ENCODE measurements at regions of chr17 and their contacts with region 1.

Region 1: GRCh38 chr17:39057701-39058206 is 90.6 kb upstream of the FBXO47 start:
- DNase-seq: no peak
- ATAC-seq: no peak
- H3K4me3 ChIP-seq: no peak overlapping the region
- H3K4me3 Mint-ChIP-seq: peak overlapping the region; percentile 55
- H3K27ac ChIP-seq: no peak overlapping the region
- H3K27ac Mint-ChIP-seq: no peak overlapping the region
- H3K4me1 ChIP-seq: peaks cover 11% of the 10 kb centered on the region
- H3K4me1 Mint-ChIP-seq: peaks cover 16% of the 10 kb centered on the region
- H3K27me3 ChIP-seq: no peaks in the 10 kb centered on the region
- H3K27me3 Mint-ChIP-seq: peaks cover under 1% of the 10 kb centered on the region
- CTCF ChIP-seq: no peak

Region 2: DNA sequence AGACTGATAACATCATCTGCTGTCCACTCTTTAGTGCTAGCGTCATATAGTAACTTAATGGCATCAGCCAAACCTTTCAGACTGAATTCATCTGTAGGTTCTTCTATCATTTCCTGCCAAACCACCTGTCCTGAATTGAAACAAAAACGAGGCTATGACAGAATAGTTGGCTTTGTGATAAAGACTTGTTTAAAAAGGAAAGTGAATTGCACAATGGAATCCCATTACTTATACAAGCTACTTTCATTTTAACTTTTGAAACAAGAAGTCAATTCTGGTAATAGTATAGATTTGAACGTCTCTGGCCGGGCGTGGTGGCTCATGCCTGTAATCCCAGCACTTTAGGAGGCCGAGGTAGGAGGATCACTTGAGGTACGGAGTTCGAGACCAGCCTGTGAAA is 114.1 kb before region 1 on chr17:
- CTCF ChIA-PET with region 1: no interaction called
- POLR2A ChIA-PET with region 1: no interaction called
- intact Hi-C with region 1: no loop called
- DNase-seq: no peak
- ATAC-seq: no peak
- H3K4me3 ChIP-seq: no peak overlapping the region
- H3K4me3 Mint-ChIP-seq: no peak overlapping the region
- H3K27ac ChIP-seq: no peak overlapping the region
- H3K27ac Mint-ChIP-seq: no peak overlapping the region
- H3K4me1 ChIP-seq: no peaks in the 10 kb centered on the region
- H3K4me1 Mint-ChIP-seq: peaks cover 1% of the 10 kb centered on the region
- H3K27me3 ChIP-seq: no peaks in the 10 kb centered on the region
- H3K27me3 Mint-ChIP-seq: no peaks in the 10 kb centered on the region
- CTCF ChIP-seq: no peak

Region 3: GRCh38 chr17:38967290-38967738 is 90.4 kb before region 1 on chr17 and contains the start of gene FBXO47:
- CTCF ChIA-PET with region 1: no interaction called
- POLR2A ChIA-PET with region 1: no interaction called
- intact Hi-C with region 1: loop called in 1 of 2 experiments (anchors 5 kb)
- DNase-seq: peak; percentile 61 to 93 (median 82)
- ATAC-seq: peak; percentile 98
- H3K4me3 ChIP-seq: peak within 1 kb of the TSS; percentile 18 to 53
- H3K4me3 Mint-ChIP-seq: peak within 1 kb of the TSS; percentile 81
- H3K27ac ChIP-seq: peak within 1 kb of the TSS; percentile 42 to 65
- H3K27ac Mint-ChIP-seq: peak within 1 kb of the TSS; percentile 89
- H3K4me1 ChIP-seq: peaks cover 9% of the 10 kb centered on the region
- H3K4me1 Mint-ChIP-seq: peaks cover 19% of the 10 kb centered on the region
- H3K27me3 ChIP-seq: no peaks in the 10 kb centered on the region
- H3K27me3 Mint-ChIP-seq: no peaks in the 10 kb centered on the region
- CTCF ChIP-seq: no peak
- total RNA-seq, gene FBXO47: not detected

Region 4: DNA sequence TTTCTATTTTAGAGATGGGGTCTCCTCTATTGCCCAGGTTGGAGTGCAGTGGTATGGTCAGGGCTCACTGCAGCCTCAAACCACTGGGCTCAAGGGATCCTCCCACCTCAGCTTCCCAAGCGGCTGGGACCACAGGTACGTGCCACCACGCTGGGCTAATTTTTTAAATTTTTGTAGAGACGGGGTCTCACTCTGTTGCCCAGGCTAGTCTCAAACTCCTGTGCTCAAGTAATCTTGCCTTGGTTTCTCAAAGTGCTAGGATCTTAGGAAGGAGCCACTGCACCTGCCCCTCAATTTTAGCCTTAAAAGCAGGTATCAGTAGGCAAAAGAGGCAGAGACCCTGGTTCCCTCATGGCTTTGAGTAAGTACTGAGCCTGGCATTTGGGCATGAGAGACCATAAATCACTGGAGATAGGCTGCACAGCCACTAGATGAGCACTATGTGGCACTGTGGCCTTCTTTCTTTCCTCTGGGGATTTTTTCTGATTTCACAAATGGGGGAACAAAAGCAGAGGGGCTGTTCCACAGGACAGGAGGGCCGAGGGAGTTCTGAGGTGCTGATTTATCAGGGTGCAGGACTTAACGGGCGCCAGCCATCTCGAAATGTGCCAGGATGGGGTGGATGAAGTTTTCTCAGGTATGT is 11.5 kb after region 1 on chr17:
- CTCF ChIA-PET with region 1: interaction called, 12 read pairs
- POLR2A ChIA-PET with region 1: no interaction called
- intact Hi-C with region 1: no loop called
- DNase-seq: peak in 7 of 9 experiments; percentile 2 to 76 (median 32)
- ATAC-seq: peak; percentile 96
- H3K4me3 ChIP-seq: no peak overlapping the region
- H3K4me3 Mint-ChIP-seq: no peak overlapping the region
- H3K27ac ChIP-seq: no peak overlapping the region
- H3K27ac Mint-ChIP-seq: peak overlapping the region; percentile 57
- H3K4me1 ChIP-seq: no peaks in the 10 kb centered on the region
- H3K4me1 Mint-ChIP-seq: peaks cover 5% of the 10 kb centered on the region
- H3K27me3 ChIP-seq: no peaks in the 10 kb centered on the region
- H3K27me3 Mint-ChIP-seq: no peaks in the 10 kb centered on the region
- CTCF ChIP-seq: peak; percentile 65

Measured in CD8-positive, alpha-beta T cell (primary cell).